OCI-LY7 (cell line): ENCODE measurements at regions of chr19 and their contacts with region 1.

Region 1: DNA sequence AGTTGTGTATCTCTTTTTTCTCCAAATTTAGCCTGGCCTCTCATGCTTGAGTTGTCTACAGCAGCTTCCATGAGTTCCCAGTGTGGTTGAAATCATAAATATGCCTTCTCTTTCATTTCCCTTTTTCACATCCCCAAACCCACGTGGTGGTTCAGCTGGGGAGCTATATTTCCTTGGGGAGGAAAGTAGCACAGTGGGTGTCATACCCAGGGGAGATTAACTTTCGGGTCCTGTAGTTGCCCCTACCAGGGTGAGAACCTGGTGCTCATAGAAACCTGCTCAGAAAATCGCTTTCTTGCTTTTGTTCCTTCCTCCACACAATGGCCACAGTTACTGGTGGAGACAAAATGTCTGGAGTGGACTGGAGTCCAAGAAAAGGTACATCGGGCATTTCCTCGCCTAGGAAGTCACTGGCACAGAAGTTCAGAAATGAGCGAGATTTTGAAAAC is 7.0 kb upstream of the LILRA4 start:
- DNase-seq: peak; percentile 76
- H3K4me3 ChIP-seq: peak overlapping the region; percentile 27
- H3K27ac ChIP-seq: peak overlapping the region; percentile 25
- H3K4me1 ChIP-seq: peaks cover 38% of the 10 kb centered on the region
- CTCF ChIP-seq: no peak

Region 2: DNA sequence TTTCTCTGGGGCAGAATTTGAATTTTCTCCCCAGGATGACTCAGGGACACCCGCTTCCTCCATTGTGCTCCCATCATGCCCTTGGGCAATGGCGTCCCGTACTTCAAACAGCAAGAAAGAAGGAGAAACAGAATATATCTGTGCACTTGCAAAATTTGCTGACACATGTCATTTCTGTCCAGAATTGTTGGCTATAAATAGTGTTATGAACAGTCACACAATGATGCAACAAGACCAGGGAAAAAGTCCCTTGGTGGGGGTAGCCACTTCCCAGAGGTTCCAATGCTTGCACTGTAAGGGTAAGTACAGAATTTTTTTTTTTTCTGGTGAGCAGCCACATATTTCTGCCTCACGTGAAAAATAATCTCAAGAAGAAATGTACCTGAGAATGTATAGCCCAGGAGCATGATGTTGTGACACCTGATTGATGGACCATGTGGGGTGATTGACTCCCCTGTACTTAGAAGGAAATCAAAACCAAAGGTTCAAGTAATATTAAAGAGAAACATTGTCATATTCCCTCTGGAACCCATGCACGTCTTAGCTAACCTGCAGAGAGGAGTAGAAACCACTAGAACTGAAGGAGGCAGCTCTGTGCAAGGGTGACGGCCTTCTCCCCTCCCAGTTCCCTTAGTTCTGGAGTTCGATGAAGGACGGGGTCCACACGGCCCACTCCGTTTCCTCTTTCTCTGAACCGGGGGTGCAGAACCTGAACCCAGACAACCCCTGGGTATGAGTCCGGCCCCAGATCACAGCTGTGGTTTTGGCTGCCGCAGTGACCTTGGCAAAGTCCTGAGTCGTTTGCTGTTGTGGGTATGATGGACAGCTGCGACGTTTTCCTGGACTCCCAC is 28.0 kb after region 1 on chr19:
- CTCF ChIA-PET with region 1: no interaction called
- POLR2A ChIA-PET with region 1: no interaction called
- intact Hi-C with region 1: loop called (anchors 1 kb)
- DNase-seq: no peak
- H3K4me3 ChIP-seq: no peak overlapping the region
- H3K27ac ChIP-seq: no peak overlapping the region
- H3K4me1 ChIP-seq: peaks cover 58% of the 10 kb centered on the region
- CTCF ChIP-seq: no peak

Region 3: GRCh38 chr19:54390942-54391577 is 45.1 kb after region 1 on chr19:
- CTCF ChIA-PET with region 1: no interaction called
- POLR2A ChIA-PET with region 1: no interaction called
- intact Hi-C with region 1: no loop called
- DNase-seq: peak; percentile 82
- H3K4me3 ChIP-seq: no peak overlapping the region
- H3K27ac ChIP-seq: no peak overlapping the region
- H3K4me1 ChIP-seq: peaks cover 33% of the 10 kb centered on the region
- CTCF ChIP-seq: peak; percentile 92